ENCODE measurements at regions of chr18 and their contacts with region 1.

Region 1: DNA sequence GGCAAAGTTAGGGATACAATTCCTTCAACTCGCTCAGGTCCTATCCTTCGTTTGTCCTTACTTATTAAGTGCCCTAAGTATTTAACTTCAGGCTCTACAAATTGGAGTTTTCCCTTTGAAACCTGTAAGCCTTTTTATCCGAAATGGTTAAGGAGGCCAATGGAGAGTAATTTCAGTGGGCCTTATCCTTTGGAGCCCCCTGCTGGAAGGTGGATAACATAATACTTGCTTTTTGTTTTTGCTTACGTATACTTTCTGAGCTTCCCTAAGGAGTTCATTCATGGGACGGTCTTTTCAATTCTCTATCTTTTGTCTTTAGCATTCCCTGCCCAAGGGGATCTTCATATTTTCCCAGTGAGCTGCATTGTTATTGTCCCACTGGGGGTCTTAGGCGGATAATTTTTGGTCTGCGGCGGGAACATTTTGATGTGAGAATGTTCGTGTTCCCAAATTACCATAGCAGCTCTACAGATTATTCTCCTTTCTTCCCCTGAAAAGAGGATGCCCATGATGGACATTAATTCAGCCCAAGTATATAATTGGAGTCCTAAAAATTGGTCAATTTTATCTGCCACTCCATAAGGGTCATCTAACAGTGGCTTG is 34.4 kb upstream of the TRAPPC8 start:
- DNase-seq: peak; percentile 68
- ATAC-seq: peak; percentile 83
- H3K4me3 ChIP-seq: no peak overlapping the region
- H3K27ac ChIP-seq: no peak overlapping the region
- H3K4me1 ChIP-seq: no peaks in the 10 kb centered on the region
- H3K27me3 ChIP-seq: 0 out of 5 replicates have a peak, but pooled peaks cover 0 to 4% of the 10 kb centered on the region in 2 experiments
- CTCF ChIP-seq: peak; percentile 77
- EP300 ChIP-seq: no peak
- POLR2A ChIP-seq: no peak
- RAD21 ChIP-seq: peak; percentile 67

Region 2: DNA sequence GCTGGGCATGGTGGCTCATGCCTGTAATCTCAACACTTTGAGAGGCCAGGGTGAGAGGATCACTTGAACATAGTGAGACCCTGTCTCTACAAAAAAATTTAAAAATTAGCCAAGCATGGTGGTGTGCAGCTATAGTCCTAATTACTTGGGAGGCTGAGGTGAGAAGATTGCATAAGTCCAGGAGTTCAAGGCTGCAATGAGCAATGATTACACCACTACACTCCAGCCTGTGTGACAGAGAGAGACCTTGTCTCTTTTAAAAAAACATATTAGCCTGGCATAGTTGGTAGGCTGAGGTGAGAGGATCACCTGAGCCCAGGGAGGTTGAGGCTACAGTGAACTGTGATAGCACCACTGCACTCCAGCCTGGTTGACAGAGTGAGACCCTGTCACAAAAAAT is 48.1 kb before region 1 on chr18:
- CTCF ChIA-PET with region 1: no interaction called
- POLR2A ChIA-PET with region 1: no interaction called
- in situ Hi-C with region 1: no loop called
- intact Hi-C with region 1: loop called (anchors 5 kb)
- DNase-seq: peak; percentile 40
- ATAC-seq: peak; percentile 89
- H3K4me3 ChIP-seq: no peak overlapping the region
- H3K27ac ChIP-seq: peak overlapping the region; percentile 47
- H3K4me1 ChIP-seq: peaks cover 17% of the 10 kb centered on the region
- H3K27me3 ChIP-seq: no peaks in the 10 kb centered on the region
- CTCF ChIP-seq: no peak
- EP300 ChIP-seq: peak in 1 of 2 experiments; percentile 43; a peak in 1 of 4 replicates
- POLR2A ChIP-seq: no peak
- RAD21 ChIP-seq: no peak

Region 3: GRCh38 chr18:32040936-32041335 is 63.6 kb after region 1 on chr18:
- CTCF ChIA-PET with region 1: no interaction called
- POLR2A ChIA-PET with region 1: no interaction called
- in situ Hi-C with region 1: no loop called
- intact Hi-C with region 1: no loop called
- DNase-seq: no peak
- ATAC-seq: no peak
- H3K4me3 ChIP-seq: no peak overlapping the region
- H3K27ac ChIP-seq: no peak overlapping the region
- H3K4me1 ChIP-seq: no peaks in the 10 kb centered on the region
- H3K27me3 ChIP-seq: no peaks in the 10 kb centered on the region
- CTCF ChIP-seq: no peak
- EP300 ChIP-seq: no peak
- POLR2A ChIP-seq: no peak
- RAD21 ChIP-seq: no peak

Measured in HepG2 (cell line).